IMR-90 (cell line): ENCODE measurements at regions of chr12 and their contacts with region 1.

Region 1: DNA sequence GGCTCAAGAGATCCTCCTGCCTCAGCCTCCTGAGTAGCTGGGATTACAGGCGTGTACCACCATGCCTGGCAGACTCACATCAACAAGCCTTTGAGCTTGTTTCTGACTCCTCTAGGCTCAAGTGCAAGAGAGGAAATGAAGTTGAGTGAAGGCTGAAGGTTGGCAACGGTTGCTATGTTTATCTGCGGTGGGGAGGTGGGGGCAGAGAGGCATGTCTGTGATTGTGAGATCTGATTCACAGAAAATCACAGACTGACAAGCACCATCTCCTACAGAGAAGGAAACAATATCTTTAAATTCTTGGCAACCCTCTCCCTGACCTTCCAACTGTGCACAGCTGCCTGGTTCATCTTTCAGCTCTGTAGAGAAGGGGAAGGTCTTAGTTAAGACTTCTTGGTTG is 22.1 kb upstream of the NINJ2 start:
- DNase-seq: peak; percentile 28
- ATAC-seq: no peak
- H3K4me3 ChIP-seq: no peak overlapping the region
- H3K27ac ChIP-seq: no peak overlapping the region
- H3K4me1 ChIP-seq: no peaks in the 10 kb centered on the region; the same call in 1 of the 2 replicates
- H3K27me3 ChIP-seq: peaks cover 4% of the 10 kb centered on the region; the same call in 1 of the 2 replicates
- CTCF ChIP-seq: no peak
- POLR2A ChIP-seq: no peak
- RAD21 ChIP-seq: no peak

Region 2: DNA sequence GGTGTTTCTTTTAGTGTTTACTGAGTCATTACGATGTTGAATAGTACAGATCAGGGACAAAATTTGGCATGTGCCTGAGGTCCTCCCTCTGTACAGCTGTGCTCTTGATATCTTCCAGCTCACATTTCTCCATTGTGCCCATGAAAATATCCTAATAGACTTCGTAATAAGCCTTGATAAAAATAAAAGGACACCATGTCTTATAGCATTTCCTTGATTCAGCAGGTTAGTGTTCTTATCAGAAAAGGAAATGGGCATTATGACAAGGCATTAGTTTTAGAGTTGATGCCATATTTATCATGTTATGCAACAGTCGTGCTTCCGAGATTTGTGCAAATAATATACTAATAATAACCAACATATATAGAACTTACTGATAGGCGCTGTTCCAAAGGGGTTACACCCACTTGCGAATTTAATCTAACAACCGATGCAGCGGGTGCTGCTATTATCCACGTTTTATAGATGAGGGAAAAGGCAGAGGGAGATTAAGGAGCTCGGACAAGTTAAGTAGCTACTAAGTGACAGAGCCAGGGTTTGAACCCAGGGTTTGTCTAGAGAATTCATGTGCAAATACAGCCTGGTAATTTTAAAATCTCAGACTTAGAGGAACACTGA is 51.8 kb after region 1 on chr12:
- CTCF ChIA-PET with region 1: no interaction called
- POLR2A ChIA-PET with region 1: no interaction called
- dilution Hi-C with region 1: no loop called
- in situ Hi-C with region 1: no loop called
- intact Hi-C with region 1: loop called (anchors 10 kb)
- DNase-seq: no peak
- ATAC-seq: no peak
- H3K4me3 ChIP-seq: no peak overlapping the region
- H3K27ac ChIP-seq: no peak overlapping the region
- H3K4me1 ChIP-seq: no peaks in the 10 kb centered on the region
- H3K27me3 ChIP-seq: peaks cover 15% of the 10 kb centered on the region
- CTCF ChIP-seq: no peak
- POLR2A ChIP-seq: no peak
- RAD21 ChIP-seq: no peak